IMR-90 (cell line): ENCODE measurements at regions of chr5 and their contacts with region 1.

Region 1: GRCh38 chr5:145958436-145958835 is 22.1 kb downstream of the SH3RF2 start:
- DNase-seq: no peak
- ATAC-seq: no peak
- H3K4me3 ChIP-seq: no peak overlapping the region
- H3K27ac ChIP-seq: no peak overlapping the region
- H3K4me1 ChIP-seq: no peaks in the 10 kb centered on the region; the same call in 1 of the 2 replicates
- H3K27me3 ChIP-seq: no peaks in the 10 kb centered on the region; the same call in 1 of the 2 replicates
- CTCF ChIP-seq: no peak
- POLR2A ChIP-seq: no peak
- RAD21 ChIP-seq: no peak

Region 2: DNA sequence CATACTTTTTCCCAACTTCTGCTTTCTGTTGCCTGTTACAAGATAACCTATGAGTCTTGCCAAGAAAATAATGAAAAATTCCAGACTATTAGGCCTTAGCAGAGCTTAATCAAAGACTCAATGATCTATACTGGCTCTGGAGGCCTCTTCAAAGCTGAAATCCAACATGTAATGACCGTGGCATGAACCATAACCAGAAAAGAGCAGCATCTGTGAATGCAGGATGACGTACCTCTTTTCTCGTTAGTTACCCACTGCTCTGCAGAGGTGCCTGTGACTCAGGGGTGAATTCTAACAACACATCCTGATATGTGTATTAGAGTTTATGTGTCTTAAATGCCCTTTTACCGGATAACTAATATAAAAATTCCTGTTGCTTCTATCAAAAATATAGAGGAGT is 768.7 kb before region 1 on chr5:
- CTCF ChIA-PET with region 1: no interaction called
- POLR2A ChIA-PET with region 1: no interaction called
- dilution Hi-C with region 1: no loop called
- in situ Hi-C with region 1: no loop called
- intact Hi-C with region 1: no loop called
- DNase-seq: peak; percentile 4
- ATAC-seq: no peak
- H3K4me3 ChIP-seq: no peak overlapping the region
- H3K27ac ChIP-seq: no peak overlapping the region
- H3K4me1 ChIP-seq: no peaks in the 10 kb centered on the region
- H3K27me3 ChIP-seq: no peaks in the 10 kb centered on the region
- CTCF ChIP-seq: no peak
- POLR2A ChIP-seq: no peak
- RAD21 ChIP-seq: no peak

Region 3: DNA sequence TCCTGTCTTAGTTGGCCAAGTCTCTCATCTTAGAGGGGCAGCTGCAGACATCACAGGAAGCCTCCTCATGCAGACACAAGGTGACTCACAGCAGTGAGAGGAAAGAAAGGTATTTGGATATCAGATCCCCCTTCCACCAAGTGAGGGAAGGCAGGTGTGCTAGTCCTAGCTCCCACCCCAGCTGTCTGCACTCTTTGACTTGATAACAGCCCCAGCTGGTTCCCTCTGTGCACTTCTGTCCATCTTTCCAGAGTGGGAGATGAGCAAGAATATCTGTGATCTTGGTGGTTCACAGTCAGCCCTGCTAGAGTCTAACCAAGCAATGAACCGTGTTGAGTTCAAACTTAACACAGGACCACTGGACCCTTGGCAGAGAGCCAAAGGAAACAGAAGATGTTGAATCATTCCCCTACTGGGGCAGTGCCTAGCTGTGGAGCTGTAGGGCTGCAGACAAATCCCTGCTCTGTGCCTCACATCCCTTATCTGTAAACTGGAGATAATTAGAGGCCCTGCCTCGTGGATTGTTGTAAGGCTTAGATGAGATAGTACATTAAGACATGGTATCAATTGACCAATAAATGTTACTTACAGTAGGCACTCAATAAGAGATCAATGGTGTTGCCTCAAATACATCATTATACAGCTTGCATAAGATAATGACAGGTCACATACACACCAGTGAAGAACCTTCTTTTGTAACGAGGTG is 17.1 kb after region 1 on chr5:
- CTCF ChIA-PET with region 1: no interaction called
- POLR2A ChIA-PET with region 1: no interaction called
- dilution Hi-C with region 1: no loop called
- in situ Hi-C with region 1: no loop called
- intact Hi-C with region 1: loop called (anchors 1 kb)
- DNase-seq: peak; percentile 89
- ATAC-seq: peak; percentile 73
- H3K4me3 ChIP-seq: no peak overlapping the region
- H3K27ac ChIP-seq: no peak overlapping the region
- H3K4me1 ChIP-seq: peaks cover 4% of the 10 kb centered on the region; the same call in 1 of the 2 replicates
- H3K27me3 ChIP-seq: no peaks in the 10 kb centered on the region
- CTCF ChIP-seq: no peak
- POLR2A ChIP-seq: no peak
- RAD21 ChIP-seq: no peak

Region 4: DNA sequence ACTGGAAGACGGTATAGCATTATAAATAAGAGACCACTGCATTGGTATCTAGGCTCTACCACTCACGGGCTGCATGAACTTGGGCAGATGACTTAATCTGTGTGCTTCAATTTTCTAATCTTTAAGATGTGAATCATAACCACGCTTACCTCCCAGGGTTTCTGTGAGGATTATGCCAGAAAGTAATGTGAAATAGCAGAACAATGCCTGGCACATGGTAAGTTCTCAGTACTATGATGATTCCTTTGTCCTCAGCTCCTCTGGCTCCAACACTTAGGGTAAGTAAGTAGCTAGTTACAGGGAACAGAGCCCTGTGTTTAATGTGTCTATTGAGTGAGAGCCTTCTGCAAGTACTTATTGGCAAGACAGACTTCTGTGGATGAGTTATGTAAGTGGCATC is 411.3 kb after region 1 on chr5:
- CTCF ChIA-PET with region 1: no interaction called
- POLR2A ChIA-PET with region 1: no interaction called
- dilution Hi-C with region 1: no loop called
- in situ Hi-C with region 1: no loop called
- intact Hi-C with region 1: no loop called
- DNase-seq: peak; percentile 53
- ATAC-seq: no peak
- H3K4me3 ChIP-seq: no peak overlapping the region
- H3K27ac ChIP-seq: no peak overlapping the region
- H3K4me1 ChIP-seq: no peaks in the 10 kb centered on the region
- H3K27me3 ChIP-seq: peaks cover 2% of the 10 kb centered on the region
- CTCF ChIP-seq: no peak
- POLR2A ChIP-seq: no peak
- RAD21 ChIP-seq: no peak